Caco-2 (cell line): ENCODE measurements at regions of chr1 and their contacts with region 1.

Region 1: GRCh38 chr1:89901957-89902669 is 81.3 kb downstream of the LRRC8D start:
- DNase-seq: peak; percentile 75 to 84
- H3K4me3 ChIP-seq: no peak overlapping the region; the same call in 1 of the 2 replicates
- H3K4me3 Mint-ChIP-seq: peak overlapping the region; percentile 53
- H3K27ac Mint-ChIP-seq: peak overlapping the region; percentile 82
- H3K4me1 ChIP-seq: peaks cover 73% of the 10 kb centered on the region
- H3K4me1 Mint-ChIP-seq: peaks cover 15% of the 10 kb centered on the region
- H3K27me3 ChIP-seq: no peaks in the 10 kb centered on the region
- H3K27me3 Mint-ChIP-seq: no peaks in the 10 kb centered on the region
- CTCF ChIP-seq: no peak

Region 2: DNA sequence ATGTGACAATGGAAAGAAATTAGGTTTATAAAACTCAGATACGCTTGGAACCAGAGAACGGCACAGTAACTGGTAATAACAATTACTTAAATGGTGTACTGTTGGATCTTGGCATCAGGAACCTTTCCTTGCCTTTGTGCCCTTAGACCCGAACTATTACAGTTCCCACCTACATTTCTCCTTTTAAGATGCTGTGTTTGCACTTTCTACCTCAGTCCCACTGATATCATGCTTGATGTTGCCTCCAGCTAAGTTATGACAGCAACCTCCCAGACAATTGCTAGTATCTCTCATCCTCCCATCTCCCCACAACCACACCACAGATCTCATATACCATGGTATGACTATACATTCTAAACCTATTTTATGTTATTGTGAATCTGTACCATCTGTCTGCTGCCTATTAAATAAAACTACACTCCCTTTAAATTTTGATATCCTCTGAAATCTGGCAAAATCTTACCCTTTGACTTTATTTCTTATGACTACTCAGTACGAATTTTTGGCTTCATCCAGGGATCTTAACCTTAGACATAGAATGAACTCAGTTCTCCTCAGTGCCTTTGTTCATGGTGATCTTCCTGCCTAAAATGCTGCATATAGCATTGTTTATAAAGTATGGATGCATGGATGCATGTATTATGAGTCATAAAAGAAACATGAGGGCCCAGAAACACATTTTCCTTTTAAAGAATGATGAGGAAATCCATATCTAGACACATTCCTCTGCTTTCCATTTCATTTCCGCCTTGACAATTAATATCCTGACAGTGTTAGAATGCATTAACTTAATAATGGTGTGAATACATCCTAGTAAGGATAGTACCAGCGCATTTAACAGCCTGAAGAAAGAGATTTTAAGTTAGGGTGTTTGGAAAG is 17.2 kb before region 1 on chr1:
- CTCF ChIA-PET with region 1: no interaction called
- POLR2A ChIA-PET with region 1: no interaction called
- intact Hi-C with region 1: loop called (anchors 2 kb)
- DNase-seq: no peak
- H3K4me3 ChIP-seq: no peak overlapping the region
- H3K4me3 Mint-ChIP-seq: no peak overlapping the region
- H3K27ac Mint-ChIP-seq: no peak overlapping the region
- H3K4me1 ChIP-seq: peaks cover 15% of the 10 kb centered on the region
- H3K4me1 Mint-ChIP-seq: peaks cover 11% of the 10 kb centered on the region
- H3K27me3 ChIP-seq: no peaks in the 10 kb centered on the region
- H3K27me3 Mint-ChIP-seq: no peaks in the 10 kb centered on the region
- CTCF ChIP-seq: no peak

Region 3: DNA sequence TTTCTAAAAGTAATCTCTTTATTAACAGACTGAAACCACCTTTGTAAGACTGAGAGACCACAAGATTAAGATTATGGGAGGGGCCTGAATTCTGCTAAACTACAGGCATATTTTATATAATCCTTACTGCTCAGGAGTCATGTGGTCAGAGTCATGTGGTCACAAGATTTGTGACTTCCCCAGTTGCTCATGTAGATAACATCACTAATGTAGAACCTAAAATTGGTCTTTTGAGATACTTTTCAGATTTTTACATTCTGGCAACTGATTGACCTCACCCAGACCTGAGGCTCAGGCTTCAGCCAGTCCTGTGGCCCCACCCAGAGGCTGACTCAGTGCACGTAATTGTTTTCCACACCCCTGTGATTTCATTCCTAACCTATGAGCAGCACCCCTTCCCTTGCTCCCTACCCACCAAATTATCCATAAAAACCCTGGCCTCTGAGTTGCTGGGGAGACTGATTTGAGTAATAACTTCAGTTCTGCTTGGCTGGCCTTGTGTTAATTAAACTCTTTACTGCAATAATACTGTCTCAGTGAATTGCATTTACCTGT is 51.0 kb after region 1 on chr1:
- CTCF ChIA-PET with region 1: no interaction called
- POLR2A ChIA-PET with region 1: no interaction called
- intact Hi-C with region 1: loop called (anchors 1 kb)
- DNase-seq: peak; percentile 48 to 61
- H3K4me3 ChIP-seq: no peak overlapping the region
- H3K4me3 Mint-ChIP-seq: no peak overlapping the region
- H3K27ac Mint-ChIP-seq: no peak overlapping the region
- H3K4me1 ChIP-seq: peaks cover 52% of the 10 kb centered on the region
- H3K4me1 Mint-ChIP-seq: peaks cover 25% of the 10 kb centered on the region
- H3K27me3 ChIP-seq: no peaks in the 10 kb centered on the region
- H3K27me3 Mint-ChIP-seq: no peaks in the 10 kb centered on the region
- CTCF ChIP-seq: no peak